Heart left ventricle (tissue), 16 donors: ENCODE measurements at regions of chr5 and their contacts with region 1.

Region 1: DNA sequence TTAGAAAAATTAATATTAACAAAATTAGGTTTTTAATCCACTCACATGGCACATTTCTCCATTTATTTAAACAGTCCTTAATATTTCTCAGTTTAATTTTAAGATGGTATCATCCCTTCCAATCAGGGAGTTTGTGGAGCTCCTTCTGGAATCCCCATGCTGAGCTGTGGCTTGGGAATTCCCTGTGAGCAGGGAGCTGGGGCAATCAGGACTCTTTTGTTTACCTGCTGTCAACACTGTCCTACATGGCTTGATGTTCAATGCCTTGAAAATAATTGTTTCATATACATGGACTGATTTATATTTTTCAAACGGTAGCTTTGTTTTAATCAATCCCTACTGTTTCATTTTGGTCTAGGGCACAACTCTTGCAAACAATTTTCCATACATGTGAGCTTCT is 1095.4 kb downstream of the CDH18 start:
- DNase-seq: no peak
- ATAC-seq: no peak
- H3K4me3 ChIP-seq: no peak overlapping the region
- H3K27ac ChIP-seq: no peak overlapping the region
- H3K4me1 ChIP-seq: no peaks in the 10 kb centered on the region
- H3K27me3 ChIP-seq: no peaks in the 10 kb centered on the region
- CTCF ChIP-seq: no peak
- POLR2A ChIP-seq: no peak

Region 2: GRCh38 chr5:19058216-19058615 is 165.6 kb after region 1 on chr5:
- intact Hi-C with region 1: loop called in 1 of 10 experiments (anchors 5 kb)
- DNase-seq: no peak
- ATAC-seq: no peak
- H3K4me3 ChIP-seq: no peak overlapping the region
- H3K27ac ChIP-seq: no peak overlapping the region
- H3K4me1 ChIP-seq: no peaks in the 10 kb centered on the region
- H3K27me3 ChIP-seq: no peaks in the 10 kb centered on the region
- CTCF ChIP-seq: no peak
- POLR2A ChIP-seq: no peak